IMR-90 (cell line): ENCODE measurements at regions of chr18 and their contacts with region 1.

Region 1: DNA sequence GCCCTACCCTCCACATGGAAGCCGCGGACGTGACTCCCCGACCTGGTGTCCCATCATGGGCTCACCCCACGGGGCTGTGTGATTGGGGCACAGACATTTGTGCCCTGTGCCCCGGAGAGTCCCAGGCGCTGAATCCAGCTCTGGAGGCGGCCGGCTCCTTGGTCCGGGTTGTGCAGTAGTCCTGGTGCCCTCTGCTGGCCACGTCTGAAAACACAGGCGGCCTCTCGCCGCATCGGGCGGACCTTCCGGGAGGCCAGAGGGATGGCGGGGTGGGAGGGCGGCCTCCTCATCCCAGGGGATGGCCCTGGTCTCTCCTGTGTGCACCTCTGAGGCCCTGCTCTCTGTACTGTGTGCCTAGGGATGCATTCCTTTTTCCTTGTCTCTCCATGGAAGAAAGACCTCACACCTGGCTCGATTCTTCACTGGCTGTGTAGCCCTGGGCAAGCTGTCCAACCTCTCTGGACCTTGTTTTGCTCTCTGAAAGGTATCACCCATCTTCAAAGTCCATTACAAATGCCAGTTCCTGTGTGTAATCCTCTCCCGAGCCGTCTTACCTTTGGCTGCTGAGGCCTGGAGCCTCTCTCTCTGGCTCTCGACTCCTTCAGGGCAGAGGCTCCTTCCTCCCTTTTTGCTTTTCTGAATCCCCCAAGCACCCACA is 27.6 kb downstream of the CELF4 start:
- DNase-seq: peak; percentile 44
- ATAC-seq: peak; percentile 98
- H3K4me3 ChIP-seq: no peak overlapping the region
- H3K27ac ChIP-seq: no peak overlapping the region
- H3K4me1 ChIP-seq: no peaks in the 10 kb centered on the region
- H3K27me3 ChIP-seq: peaks cover 28% of the 10 kb centered on the region; the same call in 1 of the 2 replicates
- CTCF ChIP-seq: peak; percentile 83
- POLR2A ChIP-seq: no peak
- RAD21 ChIP-seq: peak; percentile 82

Region 2: GRCh38 chr18:37322492-37323035 is 215.4 kb before region 1 on chr18:
- CTCF ChIA-PET with region 1: no interaction called
- POLR2A ChIA-PET with region 1: no interaction called
- dilution Hi-C with region 1: no loop called
- in situ Hi-C with region 1: no loop called
- intact Hi-C with region 1: loop called (anchors 5 kb)
- DNase-seq: peak; percentile 21
- ATAC-seq: peak; percentile 93
- H3K4me3 ChIP-seq: no peak overlapping the region
- H3K27ac ChIP-seq: no peak overlapping the region
- H3K4me1 ChIP-seq: no peaks in the 10 kb centered on the region
- H3K27me3 ChIP-seq: peaks cover 43% of the 10 kb centered on the region
- CTCF ChIP-seq: peak; percentile 71
- POLR2A ChIP-seq: no peak
- RAD21 ChIP-seq: peak; percentile 61

Region 3: DNA sequence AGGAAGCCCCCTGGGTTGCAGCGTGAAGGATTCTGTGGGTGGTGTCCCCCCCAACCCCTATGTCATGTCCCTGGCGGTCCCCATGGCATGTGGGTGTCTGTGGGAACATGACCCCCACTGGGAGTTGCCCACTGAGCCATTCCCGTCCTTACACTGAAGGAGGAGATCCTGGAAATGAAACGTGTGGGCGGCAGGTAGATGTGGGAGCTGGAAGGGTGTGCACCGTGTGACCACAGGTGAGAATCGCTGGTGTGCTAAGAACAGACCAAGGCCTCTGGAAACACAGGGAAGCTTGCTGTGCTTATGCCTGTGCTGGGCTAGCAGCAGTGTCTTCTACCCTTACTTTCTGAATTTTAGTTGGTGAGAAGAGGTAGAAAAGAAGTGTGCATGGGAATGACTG is 195.2 kb before region 1 on chr18:
- CTCF ChIA-PET with region 1: no interaction called
- POLR2A ChIA-PET with region 1: no interaction called
- dilution Hi-C with region 1: no loop called
- in situ Hi-C with region 1: no loop called
- intact Hi-C with region 1: loop called (anchors 1 kb)
- DNase-seq: no peak
- ATAC-seq: no peak
- H3K4me3 ChIP-seq: no peak overlapping the region
- H3K27ac ChIP-seq: no peak overlapping the region
- H3K4me1 ChIP-seq: no peaks in the 10 kb centered on the region
- H3K27me3 ChIP-seq: peaks cover 15% of the 10 kb centered on the region; the same call in 1 of the 2 replicates
- CTCF ChIP-seq: no peak
- POLR2A ChIP-seq: no peak
- RAD21 ChIP-seq: no peak

Region 4: DNA sequence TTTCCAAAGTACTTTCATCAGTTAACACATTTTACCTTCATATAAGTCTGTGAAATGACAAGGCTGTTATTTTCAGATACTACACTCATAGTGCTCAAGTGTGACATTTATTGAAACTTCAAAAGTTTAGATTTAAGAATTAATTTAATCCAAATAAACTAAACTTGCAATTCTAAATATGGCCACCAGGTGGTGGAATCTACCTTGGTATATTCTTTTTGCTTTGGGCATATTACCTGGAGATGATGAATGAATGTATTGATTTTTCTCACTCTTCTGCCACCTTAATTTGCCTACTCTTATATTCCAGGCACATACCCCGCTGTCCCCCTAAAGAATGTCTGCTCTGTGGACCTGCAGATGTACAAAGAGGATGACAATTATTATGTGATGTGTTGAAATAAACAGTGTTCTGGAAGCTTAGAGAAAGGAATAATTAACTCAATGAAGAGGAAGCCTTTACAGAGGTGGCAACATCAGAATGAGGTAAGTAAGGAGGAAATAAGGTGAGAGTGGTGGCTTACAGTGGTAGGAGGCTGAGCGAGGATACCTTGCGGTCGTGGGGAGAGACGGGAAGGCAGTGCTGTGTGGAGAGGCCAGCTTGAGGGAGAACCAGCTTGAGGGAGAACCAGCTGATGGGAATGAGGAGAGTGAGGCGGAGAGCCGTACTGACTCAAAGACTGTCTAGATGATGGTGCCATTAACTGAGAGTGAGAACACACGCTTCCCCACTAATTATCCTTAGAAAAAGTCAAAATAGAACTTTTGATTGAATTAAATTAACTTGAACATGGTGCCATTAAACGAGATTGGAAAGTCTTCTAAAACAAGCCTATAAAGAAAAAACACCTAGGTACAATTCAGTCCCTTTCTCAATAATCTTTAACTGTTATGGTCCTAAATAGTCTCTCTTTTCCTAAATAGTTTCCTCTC is 151.9 kb before region 1 on chr18:
- CTCF ChIA-PET with region 1: no interaction called
- POLR2A ChIA-PET with region 1: no interaction called
- dilution Hi-C with region 1: no loop called
- in situ Hi-C with region 1: loop called (anchors 5 kb)
- intact Hi-C with region 1: loop called (anchors 1 kb)
- DNase-seq: peak; percentile 37
- ATAC-seq: peak; percentile 40
- H3K4me3 ChIP-seq: no peak overlapping the region
- H3K27ac ChIP-seq: no peak overlapping the region
- H3K4me1 ChIP-seq: no peaks in the 10 kb centered on the region
- H3K27me3 ChIP-seq: peaks cover 19% of the 10 kb centered on the region
- CTCF ChIP-seq: peak; percentile 86
- POLR2A ChIP-seq: no peak
- RAD21 ChIP-seq: peak; percentile 89

Region 5: DNA sequence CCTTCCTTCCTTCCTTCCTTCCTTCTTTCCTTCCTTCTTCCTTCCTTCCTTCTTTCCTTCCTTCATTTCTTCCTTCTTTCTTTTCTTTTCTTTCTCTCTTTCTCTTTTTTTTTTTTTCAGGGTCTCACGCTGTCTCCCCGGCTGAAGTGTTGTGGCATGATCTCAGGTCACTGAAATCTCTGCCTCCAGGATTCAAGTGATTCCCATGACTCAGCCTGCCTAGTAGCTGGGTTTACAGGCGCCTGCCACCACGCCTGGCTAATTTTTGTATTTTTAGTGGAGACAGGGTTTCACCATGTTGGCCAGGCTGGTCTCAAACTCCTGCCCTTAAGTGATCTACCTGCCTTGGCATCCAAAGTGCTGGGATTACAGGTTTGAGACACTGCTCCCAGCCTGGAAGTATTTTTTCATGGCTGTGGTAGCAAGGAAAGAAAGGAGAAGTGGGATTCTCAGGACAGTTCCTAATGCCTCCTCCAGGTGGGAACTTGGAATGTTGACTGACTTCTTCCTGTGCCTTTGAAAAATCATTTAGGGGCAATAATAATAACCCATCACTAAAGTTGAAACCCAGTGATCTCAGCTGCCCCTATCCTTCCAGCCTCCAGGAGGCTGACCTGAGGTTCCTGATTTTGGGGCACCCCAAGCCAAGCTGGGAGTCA is 116.8 kb after region 1 on chr18:
- CTCF ChIA-PET with region 1: no interaction called
- POLR2A ChIA-PET with region 1: no interaction called
- dilution Hi-C with region 1: no loop called
- in situ Hi-C with region 1: no loop called
- intact Hi-C with region 1: no loop called
- DNase-seq: no peak
- ATAC-seq: no peak
- H3K4me3 ChIP-seq: no peak overlapping the region
- H3K27ac ChIP-seq: no peak overlapping the region
- H3K4me1 ChIP-seq: no peaks in the 10 kb centered on the region
- H3K27me3 ChIP-seq: no peaks in the 10 kb centered on the region
- CTCF ChIP-seq: no peak
- POLR2A ChIP-seq: no peak
- RAD21 ChIP-seq: no peak